Transverse colon (tissue), 4 donors: ENCODE measurements at regions of chr18 and their contacts with region 1.

Region 1: DNA sequence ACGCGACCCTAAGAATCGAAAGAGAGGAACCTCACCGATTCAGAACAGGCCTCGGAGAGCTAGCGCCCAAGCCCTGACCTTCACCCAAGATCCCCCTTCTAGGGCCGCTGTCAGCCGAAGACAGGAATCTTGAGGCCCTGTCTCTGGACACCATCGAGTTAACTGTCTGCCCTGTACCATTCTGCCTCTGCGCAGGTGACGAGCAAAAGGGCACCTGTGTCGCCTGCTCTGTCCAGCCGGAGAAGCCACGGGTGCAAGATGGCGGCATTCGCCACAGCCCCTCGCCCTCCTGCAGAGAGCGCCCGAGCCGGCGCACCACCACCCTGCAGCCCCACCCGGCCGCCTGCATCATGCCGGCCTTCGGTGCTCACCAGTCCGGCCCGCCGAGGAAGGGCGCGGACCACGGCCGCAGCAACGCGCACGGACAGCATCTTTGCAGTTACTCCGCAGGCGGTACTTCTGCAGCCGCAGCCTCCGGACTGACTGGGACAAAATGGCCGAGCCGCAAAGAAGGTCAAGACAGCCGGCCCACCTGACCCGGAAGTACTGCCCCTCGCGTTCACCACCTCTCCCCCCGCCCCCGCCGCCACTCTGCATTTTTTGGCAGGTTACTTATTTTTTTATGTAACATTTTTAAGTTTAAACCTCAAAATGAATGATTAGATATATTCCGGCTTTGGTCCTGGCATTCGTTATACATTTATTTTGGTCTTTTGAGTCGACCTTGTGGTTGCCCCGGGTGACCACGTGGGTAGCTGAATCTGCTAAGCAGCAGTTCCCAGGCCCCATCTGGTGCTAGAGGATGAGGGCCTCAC is at the start of gene ATP5F1A:
- DNase-seq: peak; percentile 90
- H3K4me3 ChIP-seq: peak within 1 kb of the TSS; percentile 81 to 94 (median 82)
- H3K27ac ChIP-seq: peak within 1 kb of the TSS; percentile 93 to 97 (median 94)
- H3K4me1 ChIP-seq: peaks cover 3 to 44% (median 24%) of the 10 kb centered on the region in 4 donors
- H3K27me3 ChIP-seq: no peaks in the 10 kb centered on the region
- CTCF ChIP-seq: no peak
- EP300 ChIP-seq: no peak
- POLR2A ChIP-seq: peak; percentile 91
- total RNA-seq, gene ATP5F1A: 284 to 811 (median 475) TPM

Region 2: GRCh38 chr18:45935591-45936335 is 162.2 kb before region 1 on chr18:
- in situ Hi-C with region 1: loop called in 1 of 4 experiments (anchors 25 kb)
- intact Hi-C with region 1: no loop called
- DNase-seq: no peak
- H3K4me3 ChIP-seq: no peak overlapping the region
- H3K27ac ChIP-seq: no peak overlapping the region
- H3K4me1 ChIP-seq: no peaks in the 10 kb centered on the region
- H3K27me3 ChIP-seq: no peaks in the 10 kb centered on the region
- CTCF ChIP-seq: no peak
- EP300 ChIP-seq: no peak
- POLR2A ChIP-seq: no peak

Region 3: DNA sequence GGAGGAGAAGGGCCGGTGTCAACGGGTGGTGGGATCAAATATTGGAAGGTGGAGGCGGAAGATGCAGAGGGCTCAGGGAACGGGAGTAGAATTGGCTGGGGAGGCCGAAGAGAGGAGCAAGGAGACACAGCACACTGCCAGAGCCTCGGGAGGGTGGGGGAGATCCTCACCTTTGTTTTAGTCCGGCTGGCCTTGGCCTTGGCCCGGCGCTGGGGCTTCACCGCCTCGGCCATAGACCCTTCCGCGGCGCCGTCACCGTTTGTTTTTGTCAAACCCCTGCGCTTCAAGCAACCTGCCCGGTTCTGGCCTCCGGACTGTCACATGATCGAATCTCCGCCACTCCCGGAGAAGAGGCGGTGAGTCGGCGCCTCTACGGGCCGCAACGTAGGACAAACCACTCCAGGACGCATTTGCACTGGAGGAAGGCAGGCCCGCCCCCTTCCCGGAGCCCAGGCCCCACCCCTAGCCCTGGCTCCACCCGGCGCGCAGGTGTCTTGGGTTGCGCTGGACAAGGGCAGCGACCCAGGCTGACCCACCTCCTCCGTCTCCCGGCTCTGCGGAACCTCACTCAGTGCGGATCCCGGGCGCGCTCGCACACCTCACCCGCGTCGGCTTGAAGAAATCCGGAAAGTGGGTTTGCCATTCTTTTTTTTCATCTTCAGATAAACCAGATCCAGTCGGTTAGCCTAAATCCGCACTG is 130.9 kb before region 1 on chr18 and contains the start of gene EPG5:
- in situ Hi-C with region 1: loop called in 1 of 4 experiments (anchors 25 kb)
- intact Hi-C with region 1: no loop called
- DNase-seq: peak; percentile 97
- H3K4me3 ChIP-seq: peak within 1 kb of the TSS; percentile 70 to 94 (median 80)
- H3K27ac ChIP-seq: peak within 1 kb of the TSS; percentile 78 to 86 (median 82)
- H3K4me1 ChIP-seq: peaks cover 0 to 32% (median 9%) of the 10 kb centered on the region in 4 donors
- H3K27me3 ChIP-seq: no peaks in the 10 kb centered on the region
- CTCF ChIP-seq: no peak
- EP300 ChIP-seq: no peak
- POLR2A ChIP-seq: peak; percentile 52
- total RNA-seq, gene EPG5: 24.3 to 42.2 (median 35.6) TPM

Region 4: GRCh38 chr18:46134920-46135675 is 37.1 kb after region 1 on chr18:
- in situ Hi-C with region 1: no loop called
- intact Hi-C with region 1: loop called (anchors 1 kb)
- DNase-seq: no peak
- H3K4me3 ChIP-seq: no peak overlapping the region
- H3K27ac ChIP-seq: no peak overlapping the region
- H3K4me1 ChIP-seq: no peaks in the 10 kb centered on the region
- H3K27me3 ChIP-seq: no peaks in the 10 kb centered on the region
- CTCF ChIP-seq: no peak
- EP300 ChIP-seq: no peak
- POLR2A ChIP-seq: no peak